Activated naive CD4-positive, alpha-beta T cell treated with anti-CD3 and anti-CD28 coated beads for 36 hours (primary cell): ENCODE measurements at regions of chr12 and their contacts with region 1.

Region 1: DNA sequence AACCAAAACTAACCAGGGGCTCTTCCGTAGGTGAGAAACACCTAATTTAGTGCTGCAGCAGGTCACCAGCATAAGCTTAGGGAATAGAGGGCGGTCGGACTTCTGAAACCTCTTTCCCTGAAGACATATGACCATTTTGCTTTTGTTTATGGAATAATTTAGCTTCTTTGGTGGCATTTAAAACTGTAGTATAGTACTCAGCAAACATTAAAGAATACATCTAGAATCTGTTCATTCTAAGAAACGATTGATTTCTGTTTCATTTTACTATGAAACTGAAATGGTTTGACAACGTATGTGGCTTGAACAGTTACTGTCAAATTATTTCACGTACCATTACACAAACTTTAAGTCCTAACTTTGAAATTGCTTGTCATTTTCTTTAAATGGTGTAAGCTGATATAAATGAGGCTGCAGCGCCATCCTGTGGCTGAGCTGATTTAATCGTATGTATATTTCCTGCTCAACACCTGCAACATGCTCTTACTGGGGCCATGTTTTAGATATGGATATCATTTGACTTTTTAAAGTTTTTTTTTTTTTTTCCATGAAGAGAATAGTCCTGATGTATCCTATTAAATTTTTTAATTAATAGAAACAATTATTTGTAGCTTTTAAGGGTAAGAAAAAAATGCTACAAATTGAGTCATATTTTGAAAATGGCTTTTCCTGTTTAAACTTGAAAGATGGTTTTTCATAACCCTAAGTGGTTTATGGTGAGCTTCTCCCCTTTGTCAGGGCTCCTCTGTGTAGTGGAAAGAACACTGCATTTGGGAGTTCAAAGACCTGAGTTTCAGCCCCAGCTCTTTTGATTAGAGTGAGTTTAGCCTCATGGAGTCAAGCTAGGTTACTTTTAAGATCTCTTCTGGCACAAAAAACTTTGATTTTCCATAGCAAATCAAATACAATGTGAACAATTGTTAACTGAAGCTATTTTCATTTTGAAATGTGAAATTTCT is 27.4 kb downstream of the CFAP54 start:
- DNase-seq: peak; percentile 96
- H3K4me3 Mint-ChIP-seq: peak overlapping the region; percentile 2
- H3K27ac Mint-ChIP-seq: peak overlapping the region; percentile 25
- H3K4me1 Mint-ChIP-seq: peaks cover 16% of the 10 kb centered on the region
- H3K27me3 Mint-ChIP-seq: no peaks in the 10 kb centered on the region

Region 2: GRCh38 chr12:95918194-95918993 is 598.4 kb before region 1 on chr12:
- CTCF ChIA-PET with region 1: interaction called, 4 read pairs
- intact Hi-C with region 1: loop called (anchors 1 kb)
- DNase-seq: peak; percentile 65
- H3K4me3 Mint-ChIP-seq: no peak overlapping the region
- H3K27ac Mint-ChIP-seq: no peak overlapping the region
- H3K4me1 Mint-ChIP-seq: no peaks in the 10 kb centered on the region
- H3K27me3 Mint-ChIP-seq: peaks cover 2% of the 10 kb centered on the region

Region 3: GRCh38 chr12:96068111-96068510 is 448.6 kb before region 1 on chr12:
- CTCF ChIA-PET with region 1: interaction called, 20 read pairs
- intact Hi-C with region 1: no loop called
- DNase-seq: no peak
- H3K4me3 Mint-ChIP-seq: no peak overlapping the region
- H3K27ac Mint-ChIP-seq: no peak overlapping the region
- H3K4me1 Mint-ChIP-seq: peaks cover 30% of the 10 kb centered on the region
- H3K27me3 Mint-ChIP-seq: no peaks in the 10 kb centered on the region

Region 4: GRCh38 chr12:96445691-96446583 is 70.8 kb before region 1 on chr12:
- CTCF ChIA-PET with region 1: interaction called, 7 read pairs
- intact Hi-C with region 1: loop called (anchors 2 kb)
- DNase-seq: peak; percentile 68
- H3K4me3 Mint-ChIP-seq: peak overlapping the region; percentile 28
- H3K27ac Mint-ChIP-seq: peak overlapping the region; percentile 94
- H3K4me1 Mint-ChIP-seq: peaks cover 39% of the 10 kb centered on the region
- H3K27me3 Mint-ChIP-seq: no peaks in the 10 kb centered on the region

Region 5: DNA sequence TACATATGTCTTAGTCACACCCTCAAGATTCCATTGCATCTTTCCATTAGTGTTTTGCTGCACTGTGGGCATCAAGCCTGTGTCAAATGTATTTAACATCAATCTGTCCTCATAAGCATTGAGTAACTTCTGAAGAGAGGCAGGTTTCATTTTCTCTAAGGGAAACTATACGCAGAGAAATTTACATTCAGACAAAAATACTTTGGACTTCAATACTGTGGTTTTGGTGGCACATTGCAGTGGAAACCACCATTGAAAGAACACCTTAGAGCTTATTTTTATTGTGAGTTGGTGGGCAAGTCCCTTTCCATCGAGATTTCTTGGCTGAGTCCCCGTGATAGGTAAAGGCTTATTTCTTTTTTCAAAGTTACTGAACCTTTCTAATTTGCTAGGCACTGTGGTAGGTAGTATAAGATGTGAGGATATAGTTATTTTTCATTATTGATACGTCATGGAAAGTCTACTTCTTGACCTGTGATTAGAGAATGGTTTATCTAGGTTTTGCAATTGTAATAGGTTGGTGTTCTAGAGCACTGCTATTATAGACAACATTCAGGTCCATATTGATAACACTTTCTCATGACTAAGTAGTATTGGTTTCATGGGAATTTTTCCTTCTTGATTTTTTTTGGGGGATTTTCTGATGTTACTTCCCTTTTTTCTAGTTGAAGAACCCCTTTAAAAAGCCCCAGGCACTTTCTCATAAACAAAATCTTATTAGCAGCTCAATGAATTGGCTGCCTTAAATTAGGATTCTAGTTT is 54.5 kb after region 1 on chr12:
- CTCF ChIA-PET with region 1: interaction called, 3 read pairs
- intact Hi-C with region 1: loop called (anchors 1 kb)
- DNase-seq: peak; percentile 58
- H3K4me3 Mint-ChIP-seq: peak overlapping the region; percentile 27
- H3K27ac Mint-ChIP-seq: peak overlapping the region; percentile 15
- H3K4me1 Mint-ChIP-seq: peaks cover 27% of the 10 kb centered on the region
- H3K27me3 Mint-ChIP-seq: peaks cover 7% of the 10 kb centered on the region